Lower leg skin (tissue), 4 donors: ENCODE measurements at regions of chr7 and their contacts with region 1.

Region 1: GRCh38 chr7:51366930-51367613 is 50.5 kb upstream of the COBL start:
- DNase-seq: no peak
- H3K4me3 ChIP-seq: no peak overlapping the region
- CTCF ChIP-seq: peak in 1 of 3 donors; percentile 41
- POLR2A ChIP-seq: no peak

Region 2: GRCh38 chr7:51162724-51163329 is 204.2 kb before region 1 on chr7:
- intact Hi-C with region 1: loop called (anchors 5 kb)
- DNase-seq: peak in 1 of 2 donors; percentile 82
- H3K4me3 ChIP-seq: no peak overlapping the region
- CTCF ChIP-seq: no peak
- POLR2A ChIP-seq: no peak

Region 3: GRCh38 chr7:51328351-51328801 is 38.7 kb before region 1 on chr7:
- intact Hi-C with region 1: no loop called
- DNase-seq: peak in 1 of 2 donors; percentile 8
- H3K4me3 ChIP-seq: no peak overlapping the region
- CTCF ChIP-seq: no peak
- POLR2A ChIP-seq: no peak